Panc1 (cell line): ENCODE measurements at regions of chr19 and their contacts with region 1.

Region 1: DNA sequence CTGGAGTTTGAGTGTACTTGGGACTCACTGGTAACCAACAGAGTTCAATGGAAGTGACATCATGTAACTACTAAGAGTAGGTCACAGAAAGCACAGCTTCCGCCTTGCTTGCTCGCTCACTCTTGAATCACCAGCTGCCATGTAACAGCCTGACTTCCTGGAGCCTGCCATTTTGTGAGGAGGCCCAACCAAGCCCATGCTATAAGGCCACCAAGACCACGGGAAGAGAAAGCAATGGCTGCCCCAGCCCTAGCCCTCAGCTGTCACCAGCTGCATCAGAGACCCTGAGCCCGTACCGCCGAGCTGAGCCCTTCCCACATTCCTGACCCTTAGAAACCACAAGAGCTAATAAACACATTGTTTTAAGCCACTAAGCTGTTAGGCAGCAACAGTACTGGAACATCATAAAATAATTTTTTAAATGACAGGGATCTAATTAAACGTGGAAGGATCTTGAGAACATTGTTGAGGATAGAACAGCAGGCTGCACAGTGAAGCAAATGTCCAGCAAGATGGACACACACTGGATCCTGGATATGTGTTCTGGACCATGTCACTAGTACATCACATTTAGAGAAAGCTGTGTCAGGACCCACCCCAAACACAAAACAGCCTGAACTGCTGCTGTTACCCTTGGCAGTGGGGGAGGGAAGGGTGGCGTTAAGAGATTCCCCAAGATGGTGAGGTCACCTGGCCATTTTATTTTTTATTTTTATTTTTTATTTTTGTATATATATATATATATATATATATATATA is 21.7 kb upstream of the LDLR start:
- DNase-seq: no peak
- ATAC-seq: 0 out of 2 replicates have a peak, but pooled peaks have one; percentile 30
- H3K4me3 ChIP-seq: no peak overlapping the region
- H3K27ac ChIP-seq: no peak overlapping the region
- H3K4me1 ChIP-seq: no peaks in the 10 kb centered on the region
- H3K27me3 ChIP-seq: no peaks in the 10 kb centered on the region
- CTCF ChIP-seq: no peak

Region 2: DNA sequence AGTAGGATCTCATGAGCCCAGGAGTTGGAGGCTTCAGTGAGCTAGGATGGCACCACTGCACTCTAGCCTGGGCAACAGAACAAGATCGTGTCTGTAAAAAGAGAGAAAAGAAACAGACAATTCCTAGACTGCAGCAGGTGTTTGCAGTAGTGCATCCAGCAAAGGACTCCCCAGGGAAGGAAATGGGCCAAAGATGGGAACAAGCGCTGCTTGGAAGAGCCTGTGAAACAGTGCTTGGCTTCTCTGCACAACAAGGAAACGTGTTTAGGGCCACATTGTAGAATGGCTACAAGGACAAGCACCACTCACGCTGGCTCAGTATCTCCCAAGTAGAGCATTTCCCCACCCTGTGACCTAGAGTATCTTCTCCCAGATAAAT is 13.7 kb before region 1 on chr19:
- CTCF ChIA-PET with region 1: no interaction called
- POLR2A ChIA-PET with region 1: interaction called, 11 read pairs
- in situ Hi-C with region 1: no loop called
- intact Hi-C with region 1: no loop called
- DNase-seq: no peak
- ATAC-seq: no peak
- H3K4me3 ChIP-seq: no peak overlapping the region
- H3K27ac ChIP-seq: no peak overlapping the region
- H3K4me1 ChIP-seq: no peaks in the 10 kb centered on the region
- H3K27me3 ChIP-seq: no peaks in the 10 kb centered on the region
- CTCF ChIP-seq: no peak